ENCODE measurements at regions of chr10 and their contacts with region 1.

Region 1: DNA sequence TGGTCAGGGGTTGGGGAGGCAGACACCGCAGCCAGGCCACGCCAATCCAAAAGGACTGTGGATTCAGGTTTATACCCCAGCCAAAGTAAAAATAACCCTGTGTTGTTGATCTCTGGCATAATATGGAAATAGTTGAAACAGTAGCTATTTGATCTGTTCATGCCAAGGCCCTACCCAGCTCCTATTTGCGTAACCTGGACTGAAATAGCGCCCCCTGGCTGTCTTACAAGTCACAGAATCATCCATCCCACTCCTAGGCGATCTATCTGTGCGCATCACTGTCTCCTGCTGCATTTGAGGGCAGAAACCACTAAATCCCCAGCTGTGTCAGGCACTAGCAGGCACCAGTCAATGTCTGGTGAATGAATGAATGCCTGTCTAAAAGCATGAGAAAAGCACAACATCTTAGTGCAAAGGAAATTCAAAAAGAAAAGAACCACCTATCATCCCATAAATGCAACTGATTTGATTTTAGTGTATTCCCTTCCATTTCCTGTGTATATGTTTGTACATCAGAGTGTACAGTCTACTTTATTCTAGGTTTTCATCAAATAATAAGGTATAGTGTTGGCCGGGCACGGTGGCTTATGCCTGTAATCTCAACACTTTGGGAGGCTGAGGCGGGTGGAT is 160.0 kb downstream of the SLIT1 start:
- DNase-seq: no peak
- ATAC-seq: no peak
- H3K4me3 ChIP-seq: no peak overlapping the region
- H3K27ac ChIP-seq: 0 out of 2 replicates have a peak overlapping the region, but pooled peaks have one; percentile 73
- H3K4me1 ChIP-seq: peaks cover 26% of the 10 kb centered on the region
- H3K27me3 ChIP-seq: no peaks in the 10 kb centered on the region; the same call in 1 of the 2 replicates
- CTCF ChIP-seq: peak; percentile 87

Region 2: GRCh38 chr10:96964131-96964530 is 61.6 kb before region 1 on chr10:
- CTCF ChIA-PET with region 1: interaction called, 11 read pairs
- POLR2A ChIA-PET with region 1: no interaction called
- in situ Hi-C with region 1: no loop called
- intact Hi-C with region 1: no loop called
- DNase-seq: no peak
- ATAC-seq: no peak
- H3K4me3 ChIP-seq: no peak overlapping the region
- H3K27ac ChIP-seq: no peak overlapping the region
- H3K4me1 ChIP-seq: no peaks in the 10 kb centered on the region
- H3K27me3 ChIP-seq: no peaks in the 10 kb centered on the region
- CTCF ChIP-seq: no peak

Region 3: DNA sequence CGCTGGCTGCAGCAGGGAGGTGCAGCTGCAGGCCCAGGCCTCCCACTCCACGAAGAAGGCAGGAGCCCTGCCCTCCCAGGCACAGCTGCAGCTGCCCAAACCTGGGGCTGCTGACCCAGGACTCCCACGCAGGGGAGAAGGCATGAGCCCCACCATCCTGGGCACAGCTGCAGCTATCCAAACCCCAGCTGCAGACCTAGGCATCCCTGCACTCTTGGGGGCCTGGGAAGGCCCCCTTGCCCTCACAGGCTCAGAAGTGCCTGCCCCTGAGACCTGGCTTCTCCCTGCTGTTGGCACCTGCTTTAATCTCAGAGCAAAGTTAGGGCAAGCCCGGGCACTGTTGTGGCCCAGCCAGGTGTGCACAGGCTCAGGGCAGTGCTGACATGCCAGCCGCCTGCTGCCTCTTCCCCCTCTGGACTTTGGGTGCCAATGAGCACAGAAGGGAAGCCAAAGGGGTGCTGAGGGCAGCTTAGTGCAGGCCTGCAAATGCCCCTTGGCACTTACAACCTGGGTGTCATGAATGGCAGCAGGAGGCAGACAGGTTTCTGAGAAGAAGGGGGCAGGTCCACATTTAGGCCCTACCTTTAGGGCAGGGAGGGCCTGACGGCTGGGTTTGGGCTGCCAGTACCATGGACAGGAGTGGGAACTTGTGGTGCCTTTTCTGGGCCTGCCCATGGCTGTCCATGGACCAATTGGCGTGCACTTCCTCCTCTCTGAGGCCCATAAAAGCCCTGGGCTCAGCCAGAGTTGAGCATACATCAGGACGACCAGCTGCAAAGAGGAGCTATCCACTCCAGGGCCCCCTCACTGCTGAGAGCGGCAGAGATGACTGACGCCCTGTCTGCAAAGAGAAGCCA is 973.6 kb after region 1 on chr10:
- CTCF ChIA-PET with region 1: no interaction called
- POLR2A ChIA-PET with region 1: no interaction called
- in situ Hi-C with region 1: no loop called
- intact Hi-C with region 1: no loop called
- DNase-seq: no peak
- ATAC-seq: no peak
- H3K4me3 ChIP-seq: no peak overlapping the region
- H3K27ac ChIP-seq: no peak overlapping the region
- H3K4me1 ChIP-seq: no peaks in the 10 kb centered on the region
- H3K27me3 ChIP-seq: peaks cover 5% of the 10 kb centered on the region
- CTCF ChIP-seq: no peak

Measured in Panc1 (cell line).